Spleen (tissue), 13 donors: ENCODE measurements at regions of chr17 and their contacts with region 1.

Region 1: DNA sequence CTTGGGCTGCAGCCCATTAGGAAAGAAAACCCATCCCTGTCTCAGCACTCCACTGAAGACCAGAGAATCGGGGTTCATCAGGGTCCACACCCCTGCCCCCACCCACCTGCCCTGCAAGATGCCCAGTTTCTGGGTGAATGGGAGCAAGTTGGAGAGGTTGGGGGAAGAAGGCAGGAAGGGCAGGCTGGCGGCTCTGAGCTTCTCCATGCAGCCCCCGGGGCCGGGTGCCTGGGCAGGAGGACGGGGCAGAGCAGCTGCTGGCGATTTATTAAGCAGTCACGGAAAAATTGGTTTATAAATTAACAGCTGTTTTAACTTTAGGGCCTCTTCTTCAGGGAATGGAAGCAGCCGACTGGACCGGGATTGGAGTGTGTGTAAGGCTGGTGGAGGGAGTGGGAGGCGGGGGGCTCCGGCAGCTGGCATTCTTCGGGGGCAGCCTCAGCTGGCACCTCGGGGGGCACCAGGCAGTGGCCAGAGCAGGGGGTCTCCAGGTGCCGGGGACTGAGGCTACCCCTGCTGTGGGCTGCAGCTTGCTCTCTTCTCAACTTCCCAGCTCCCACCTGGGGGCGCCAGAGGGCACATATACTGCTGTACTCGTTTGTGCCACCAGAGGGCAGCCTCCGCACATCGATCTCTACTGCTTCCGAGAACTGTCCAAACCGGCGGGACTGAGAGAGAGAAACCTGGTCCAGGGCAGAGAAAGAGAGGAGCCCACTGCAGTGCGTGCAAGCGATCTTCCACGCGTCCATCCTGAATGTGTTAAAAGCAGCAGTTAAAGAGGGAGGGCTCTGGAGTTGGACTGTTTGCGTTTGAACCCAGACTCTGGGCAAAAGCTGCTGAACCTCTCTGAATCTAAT is 5.0 kb upstream of the PPP1R1B start:
- DNase-seq: peak; percentile 97
- H3K4me3 ChIP-seq: peak overlapping the region in 3 of 8 donors; percentile 3 to 46 (median 13)
- H3K27ac ChIP-seq: peak overlapping the region in 5 of 8 donors; percentile 10 to 59 (median 32)
- H3K4me1 ChIP-seq: peaks cover 0 to 52% (median 42%) of the 10 kb centered on the region in 6 donors
- H3K27me3 ChIP-seq: peaks cover 0 to 67% (median 27%) of the 10 kb centered on the region in 7 donors
- CTCF ChIP-seq: peak; percentile 99 to 100 (median 99)
- POLR2A ChIP-seq: no peak

Region 2: DNA sequence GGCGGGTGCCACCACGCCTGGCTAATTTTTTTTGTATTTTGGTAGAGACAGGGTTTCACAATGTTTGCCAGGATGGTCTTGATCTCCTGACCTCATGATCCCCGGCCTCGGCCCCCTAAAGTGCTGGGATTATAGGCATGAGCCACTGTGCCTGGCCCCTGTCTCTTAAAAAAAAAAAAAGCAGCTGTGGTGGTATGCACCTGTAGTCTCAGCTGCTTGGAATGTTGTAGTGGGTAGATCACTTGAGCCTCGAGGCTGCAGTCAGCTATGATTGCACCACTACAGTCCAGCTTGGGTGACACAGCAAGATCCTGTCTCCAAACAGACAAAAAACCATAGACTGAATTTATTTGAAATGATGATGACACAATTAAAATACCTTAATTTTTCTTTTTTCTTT is 136.2 kb before region 1 on chr17:
- intact Hi-C with region 1: no loop called
- DNase-seq: no peak
- H3K4me3 ChIP-seq: no peak overlapping the region
- H3K27ac ChIP-seq: no peak overlapping the region
- H3K4me1 ChIP-seq: peaks cover 0 to 17% (median 5%) of the 10 kb centered on the region in 6 donors
- H3K27me3 ChIP-seq: no peaks in the 10 kb centered on the region
- CTCF ChIP-seq: no peak
- POLR2A ChIP-seq: no peak

Region 3: DNA sequence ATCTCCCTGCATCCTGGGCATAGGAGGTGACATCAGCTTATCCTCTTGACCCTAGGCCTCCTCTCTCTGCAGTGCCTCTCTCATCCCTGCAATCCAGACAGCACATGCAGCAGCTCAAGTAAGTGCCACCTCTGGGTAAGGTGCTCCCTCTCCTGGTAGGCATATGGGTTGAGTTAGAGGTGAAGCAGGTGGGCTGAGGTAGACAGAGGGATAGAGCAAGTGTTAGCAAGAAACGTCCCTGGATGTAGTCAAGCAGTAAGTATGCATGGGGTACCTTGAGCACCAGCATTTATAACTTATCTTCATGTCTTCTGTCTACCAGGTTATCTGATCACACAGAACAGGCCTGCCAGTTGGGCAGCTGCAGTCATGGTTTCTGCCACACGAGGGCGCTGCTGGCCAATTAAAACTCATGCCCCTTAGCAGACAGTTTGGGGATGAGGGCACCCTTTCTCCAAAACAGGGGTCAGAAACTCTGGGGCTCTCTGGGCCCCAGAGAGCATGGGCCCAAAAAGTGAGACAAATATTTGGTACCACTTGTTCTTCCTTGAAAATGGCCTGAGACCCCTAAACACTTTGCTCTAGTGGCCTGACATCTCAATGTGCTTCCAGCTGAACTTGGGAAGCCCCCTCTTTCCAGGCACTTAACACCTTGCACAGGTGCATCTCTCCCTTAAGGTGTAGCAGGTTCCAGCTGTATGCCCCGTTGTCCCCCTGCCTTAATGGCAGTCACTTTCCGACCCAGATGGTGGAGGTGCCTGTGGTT is 73.9 kb before region 1 on chr17:
- intact Hi-C with region 1: loop called (anchors 2 kb)
- DNase-seq: peak; percentile 90
- H3K4me3 ChIP-seq: no peak overlapping the region
- H3K27ac ChIP-seq: no peak overlapping the region
- H3K4me1 ChIP-seq: peaks cover 0 to 34% (median 7%) of the 10 kb centered on the region in 6 donors
- H3K27me3 ChIP-seq: no peaks in the 10 kb centered on the region
- CTCF ChIP-seq: peak; percentile 77 to 97 (median 93)
- POLR2A ChIP-seq: no peak

Region 4: GRCh38 chr17:39754161-39754951 is 132.6 kb after region 1 on chr17:
- intact Hi-C with region 1: loop called (anchors 5 kb)
- DNase-seq: peak; percentile 100
- H3K4me3 ChIP-seq: peak overlapping the region; percentile 46 to 87 (median 60)
- H3K27ac ChIP-seq: peak overlapping the region; percentile 95 to 99 (median 98)
- H3K4me1 ChIP-seq: peaks cover 43 to 76% (median 63%) of the 10 kb centered on the region in 6 donors
- H3K27me3 ChIP-seq: no peaks in the 10 kb centered on the region
- CTCF ChIP-seq: peak; percentile 96 to 100 (median 99)
- POLR2A ChIP-seq: peak in 1 of 3 donors; percentile 3

Region 5: GRCh38 chr17:39863918-39864746 is 242.4 kb after region 1 on chr17 and contains the start of gene IKZF3:
- intact Hi-C with region 1: loop called (anchors 10 kb)
- DNase-seq: peak; percentile 93
- H3K4me3 ChIP-seq: peak within 1 kb of the TSS; percentile 37 to 72 (median 43)
- H3K27ac ChIP-seq: peak within 1 kb of the TSS; percentile 72 to 93 (median 86)
- H3K4me1 ChIP-seq: peaks cover 0 to 74% (median 41%) of the 10 kb centered on the region in 6 donors
- H3K27me3 ChIP-seq: peaks cover 0 to 86% (median 34%) of the 10 kb centered on the region in 7 donors
- CTCF ChIP-seq: peak in 9 of 11 experiments; percentile 8 to 49 (median 34)
- POLR2A ChIP-seq: no peak
- total RNA-seq, gene IKZF3: 79.1 to 132 (median 86.4) TPM

Region 6: GRCh38 chr17:40075201-40075941 is 453.6 kb after region 1 on chr17:
- intact Hi-C with region 1: no loop called
- DNase-seq: peak; percentile 86
- H3K4me3 ChIP-seq: peak overlapping the region in 1 of 8 donors; percentile 38
- H3K27ac ChIP-seq: peak overlapping the region in 7 of 8 donors; percentile 29 to 86 (median 78)
- H3K4me1 ChIP-seq: peaks cover 36 to 76% (median 59%) of the 10 kb centered on the region in 6 donors
- H3K27me3 ChIP-seq: no peaks in the 10 kb centered on the region
- CTCF ChIP-seq: peak; percentile 85 to 96 (median 92)
- POLR2A ChIP-seq: no peak